Heart right ventricle (tissue), 16 donors: ENCODE measurements at regions of chr4 and their contacts with region 1.

Region 1: DNA sequence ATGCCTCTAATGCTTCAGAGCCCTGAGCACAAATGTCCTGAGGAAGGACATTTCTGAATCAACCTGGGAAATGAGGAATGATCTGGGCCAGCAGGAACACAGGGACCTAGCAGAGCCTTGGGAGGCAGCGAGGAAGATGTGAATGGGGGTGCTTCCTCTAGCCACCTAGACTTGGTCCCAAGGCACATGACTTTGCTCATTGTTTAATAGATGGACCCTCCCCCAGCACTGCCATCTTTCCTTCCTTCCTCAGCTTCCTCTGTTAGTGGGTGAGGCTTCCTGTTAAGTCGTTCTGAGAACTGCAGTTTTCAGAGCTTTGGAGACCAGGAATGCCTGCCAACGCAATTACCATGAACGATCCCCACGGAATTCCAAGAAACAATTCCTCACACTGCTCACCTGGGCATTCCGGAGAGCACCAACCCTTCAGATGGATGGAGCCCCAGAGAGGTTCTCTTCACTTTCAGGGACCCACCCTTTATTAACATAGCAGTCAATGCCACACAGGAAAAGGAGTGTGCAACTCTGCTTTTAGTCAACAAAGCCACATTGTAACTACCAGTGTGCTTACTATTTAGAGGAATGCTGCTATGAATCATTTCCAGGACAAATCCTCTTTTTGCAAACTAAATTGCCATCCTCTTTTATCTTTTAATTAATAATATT is 48.5 kb upstream of the STIM2 start:
- DNase-seq: peak in 1 of 2 donors; percentile 40
- ATAC-seq: peak; percentile 55 to 88 (median 78)
- H3K4me3 ChIP-seq: no peak overlapping the region
- H3K27ac ChIP-seq: peak overlapping the region; percentile 23 to 85 (median 64)
- H3K4me1 ChIP-seq: peaks cover 4 to 60% (median 36%) of the 10 kb centered on the region in 9 donors
- H3K27me3 ChIP-seq: no peaks in the 10 kb centered on the region
- CTCF ChIP-seq: no peak

Region 2: DNA sequence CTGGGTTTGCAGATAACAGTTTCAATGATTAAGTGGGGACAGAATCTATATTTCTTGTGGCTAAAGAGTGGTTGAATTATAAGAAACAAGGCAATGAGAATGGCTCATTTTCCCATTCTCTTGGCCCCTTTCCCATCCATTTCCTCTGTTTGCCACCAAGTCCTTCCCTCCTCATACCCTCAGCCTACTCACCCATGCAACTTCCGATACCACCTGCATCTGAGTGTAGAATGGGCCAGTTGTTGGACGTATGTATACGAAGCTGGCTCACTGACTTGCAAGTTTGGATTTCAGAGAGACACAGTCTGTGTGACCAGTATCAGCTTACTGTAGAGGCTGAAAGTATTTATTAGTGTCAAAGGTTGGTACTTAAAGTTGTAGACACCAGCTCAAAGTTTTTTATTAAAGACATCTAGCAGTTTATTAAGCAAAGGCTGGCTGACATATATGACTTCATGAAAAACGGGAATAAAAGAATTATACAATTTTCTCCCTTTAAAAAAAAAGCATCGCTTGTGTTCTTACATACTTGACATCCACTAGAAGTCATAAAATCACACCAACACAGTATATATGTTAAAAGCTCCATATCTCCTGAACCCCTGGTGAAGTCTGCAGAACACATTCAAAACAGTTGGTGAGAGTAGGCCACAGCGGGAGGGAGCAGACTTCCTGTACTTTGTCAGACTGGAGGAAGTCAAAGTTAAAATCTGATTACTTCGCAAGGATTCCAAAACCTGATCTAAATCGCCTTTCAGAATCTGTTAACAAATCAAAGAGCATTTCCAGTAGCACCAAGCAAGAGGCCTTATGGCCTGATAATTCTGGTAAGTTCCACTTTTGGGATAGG is 26.0 kb after region 1 on chr4:
- intact Hi-C with region 1: loop called in 1 of 10 experiments (anchors 2 kb)
- DNase-seq: no peak
- ATAC-seq: no peak
- H3K4me3 ChIP-seq: no peak overlapping the region
- H3K27ac ChIP-seq: peak overlapping the region in 1 of 10 donors; percentile 41
- H3K4me1 ChIP-seq: peaks cover 4 to 25% (median 14%) of the 10 kb centered on the region in 9 donors
- H3K27me3 ChIP-seq: no peaks in the 10 kb centered on the region
- CTCF ChIP-seq: no peak

Region 3: GRCh38 chr4:26854701-26855100 is 42.5 kb after region 1 on chr4:
- intact Hi-C with region 1: loop called in 2 of 10 experiments (anchors 2 to 5 kb)
- DNase-seq: no peak
- ATAC-seq: no peak
- H3K4me3 ChIP-seq: no peak overlapping the region
- H3K27ac ChIP-seq: no peak overlapping the region
- H3K4me1 ChIP-seq: peaks cover 7 to 28% (median 21%) of the 10 kb centered on the region in 9 donors
- H3K27me3 ChIP-seq: no peaks in the 10 kb centered on the region
- CTCF ChIP-seq: no peak

Region 4: GRCh38 chr4:26873391-26874026 is 61.3 kb after region 1 on chr4:
- intact Hi-C with region 1: no loop called
- DNase-seq: no peak
- ATAC-seq: peak in 7 of 8 donors; percentile 33 to 83 (median 63)
- H3K4me3 ChIP-seq: no peak overlapping the region
- H3K27ac ChIP-seq: peak overlapping the region in 1 of 10 donors; percentile 44
- H3K4me1 ChIP-seq: peaks cover 0 to 34% (median 16%) of the 10 kb centered on the region in 9 donors
- H3K27me3 ChIP-seq: no peaks in the 10 kb centered on the region
- CTCF ChIP-seq: no peak